ENCODE measurements at regions of chr13 and their contacts with region 1.

Region 1: GRCh38 chr13:44577236-44578066 is 1.3 kb upstream of the TSC22D1 start:
- DNase-seq: peak; percentile 98
- ATAC-seq: peak; percentile 92

Region 2: GRCh38 chr13:44274452-44275205 is 302.8 kb before region 1 on chr13:
- intact Hi-C with region 1: no loop called
- DNase-seq: no peak
- ATAC-seq: peak; percentile 70

Region 3: GRCh38 chr13:44484562-44485138 is 92.8 kb before region 1 on chr13:
- intact Hi-C with region 1: loop called (anchors 5 kb)
- DNase-seq: no peak
- ATAC-seq: no peak

Region 4: DNA sequence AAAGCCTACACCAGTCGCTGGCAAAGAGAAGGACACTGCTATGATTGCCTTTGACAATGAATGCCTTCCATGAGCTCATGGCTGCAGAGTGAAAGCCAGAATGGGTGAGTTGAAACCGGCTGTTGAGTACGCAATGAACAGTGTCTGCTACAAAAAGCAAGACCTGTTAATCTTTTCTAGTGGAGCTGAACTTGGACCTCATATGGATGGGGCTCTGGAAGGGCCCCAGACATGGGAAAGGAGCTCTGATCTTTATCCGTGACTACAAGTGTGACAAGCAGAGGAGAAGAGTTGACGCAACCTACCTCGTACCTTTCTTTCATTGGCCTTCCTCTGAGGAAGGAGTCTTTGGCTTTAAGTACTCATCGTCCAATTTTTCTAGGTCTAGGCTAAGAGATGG is 65.8 kb after region 1 on chr13:
- intact Hi-C with region 1: no loop called
- DNase-seq: no peak
- ATAC-seq: no peak

Region 5: GRCh38 chr13:44692173-44692713 is 114.8 kb after region 1 on chr13:
- intact Hi-C with region 1: loop called (anchors 5 kb)
- DNase-seq: no peak
- ATAC-seq: no peak

Region 6: DNA sequence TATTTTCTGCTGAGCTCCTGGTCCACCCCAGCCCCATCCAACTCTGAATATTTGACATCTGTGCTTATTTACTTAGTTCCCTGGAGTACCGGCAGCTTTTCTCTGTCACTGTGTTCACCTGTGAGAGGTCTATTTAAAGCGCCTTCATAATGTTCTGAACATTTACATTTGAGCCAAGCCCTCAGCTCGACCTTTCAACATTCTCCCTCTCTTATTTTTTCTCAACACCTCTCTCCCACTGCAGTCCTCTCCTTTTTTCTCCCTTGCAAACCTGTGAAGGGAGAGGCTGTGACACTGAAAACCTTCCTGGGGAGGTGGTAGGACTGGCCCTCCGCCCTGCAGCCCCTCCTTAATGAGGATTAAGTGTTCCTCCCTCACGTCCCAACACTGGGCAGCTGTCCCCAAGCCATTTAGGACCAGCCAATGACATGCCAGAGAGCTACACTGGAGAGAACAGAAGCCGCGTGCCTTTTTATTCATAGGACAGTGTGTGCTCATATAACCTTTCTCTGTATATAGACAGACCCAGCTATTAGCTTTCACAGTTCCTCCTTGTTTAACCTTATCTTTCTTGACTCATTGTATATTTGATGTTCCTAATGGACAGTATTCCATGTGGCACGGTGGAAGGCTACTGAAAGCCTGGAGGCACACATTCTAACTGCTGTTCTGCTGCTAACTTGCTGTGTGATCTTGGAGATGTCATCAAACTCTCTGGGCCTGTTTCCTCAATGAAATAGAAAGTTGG is 277.0 kb after region 1 on chr13:
- intact Hi-C with region 1: loop called (anchors 5 kb)
- DNase-seq: peak; percentile 75
- ATAC-seq: peak; percentile 95

Region 7: GRCh38 chr13:44870456-44870929 is 293.0 kb after region 1 on chr13:
- intact Hi-C with region 1: loop called (anchors 5 kb)
- DNase-seq: peak; percentile 73
- ATAC-seq: peak; percentile 90

Region 8: DNA sequence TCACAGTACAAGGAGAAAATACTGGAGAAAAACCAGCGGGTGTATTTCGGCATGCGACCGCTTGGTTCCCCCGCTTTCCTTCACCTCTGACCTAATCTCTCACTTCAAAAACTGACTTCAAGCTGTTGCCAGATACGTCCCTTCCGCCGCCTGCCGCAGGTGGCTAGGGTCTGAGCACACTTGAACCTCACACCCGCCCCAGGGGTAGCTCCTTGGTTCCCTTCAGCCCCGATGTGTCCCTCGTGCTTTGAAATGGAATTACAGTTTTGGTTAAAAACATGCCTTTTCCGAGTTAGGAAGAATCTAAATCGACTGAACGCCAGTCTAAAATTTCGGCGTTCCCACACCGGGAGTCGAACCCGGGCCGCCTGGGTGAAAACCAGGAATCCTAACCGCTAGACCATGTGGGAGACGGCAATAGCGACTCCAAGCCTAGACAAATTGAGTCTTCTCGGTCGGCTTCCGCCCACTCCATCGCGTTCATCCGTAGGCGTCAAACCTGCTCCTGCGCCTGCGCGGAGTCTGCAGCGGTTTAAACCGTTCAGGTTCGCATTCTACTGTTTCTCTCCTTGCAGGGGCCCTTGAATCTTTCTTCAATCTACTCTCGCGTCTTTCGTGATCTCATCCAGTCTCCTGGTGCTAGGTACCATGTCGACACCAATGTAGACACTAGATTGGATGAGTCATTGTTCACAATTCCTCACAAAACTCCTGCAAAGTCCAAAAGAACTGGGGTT is 340.3 kb after region 1 on chr13:
- intact Hi-C with region 1: loop called (anchors 2 kb)
- DNase-seq: peak; percentile 95
- ATAC-seq: peak; percentile 91

Region 9: GRCh38 chr13:44969551-44970484 is 392.4 kb after region 1 on chr13:
- intact Hi-C with region 1: loop called (anchors 10 kb)
- DNase-seq: no peak
- ATAC-seq: peak; percentile 60

Measured in Right ventricle myocardium inferior (tissue), 1 donor.